A673 (cell line): ENCODE measurements at regions of chr7 and their contacts with region 1.

Region 1: GRCh38 chr7:36999626-37000485 is 275.6 kb upstream of the AOAH start:
- DNase-seq: no peak
- H3K4me3 ChIP-seq: no peak overlapping the region
- H3K27ac ChIP-seq: no peak overlapping the region
- H3K4me1 ChIP-seq: no peaks in the 10 kb centered on the region
- H3K27me3 ChIP-seq: peaks cover 33% of the 10 kb centered on the region
- CTCF ChIP-seq: no peak

Region 2: GRCh38 chr7:36456138-36456537 is 543.7 kb before region 1 on chr7:
- CTCF ChIA-PET with region 1: no interaction called
- POLR2A ChIA-PET with region 1: interaction called, 10 read pairs
- intact Hi-C with region 1: no loop called
- DNase-seq: no peak
- H3K4me3 ChIP-seq: no peak overlapping the region
- H3K27ac ChIP-seq: no peak overlapping the region
- H3K4me1 ChIP-seq: no peaks in the 10 kb centered on the region
- H3K27me3 ChIP-seq: no peaks in the 10 kb centered on the region
- CTCF ChIP-seq: no peak

Region 3: DNA sequence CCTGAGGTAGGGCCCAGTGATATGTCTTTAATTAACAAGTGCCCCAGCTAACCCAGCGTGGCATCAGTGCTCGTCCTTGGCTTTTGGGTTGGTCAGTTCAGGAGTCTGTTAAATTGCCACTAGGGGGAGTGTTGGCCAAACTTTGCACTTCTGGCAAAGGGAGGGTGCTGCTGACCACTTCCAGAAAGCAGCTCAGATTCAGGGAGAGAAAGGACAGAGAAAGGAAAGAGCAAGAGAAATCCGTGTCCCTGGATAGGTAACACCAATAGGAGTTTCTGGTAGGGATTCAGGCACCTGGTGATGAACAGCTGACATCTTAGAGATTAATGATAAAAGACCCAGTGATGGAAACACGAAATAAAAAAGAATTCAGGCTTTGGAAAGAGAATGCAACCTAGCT is 32.5 kb before region 1 on chr7:
- CTCF ChIA-PET with region 1: no interaction called
- POLR2A ChIA-PET with region 1: no interaction called
- intact Hi-C with region 1: no loop called
- DNase-seq: peak; percentile 48
- H3K4me3 ChIP-seq: no peak overlapping the region
- H3K27ac ChIP-seq: no peak overlapping the region
- H3K4me1 ChIP-seq: no peaks in the 10 kb centered on the region
- H3K27me3 ChIP-seq: no peaks in the 10 kb centered on the region
- CTCF ChIP-seq: peak; percentile 75

Region 4: GRCh38 chr7:37376386-37376785 is 376.5 kb after region 1 on chr7:
- CTCF ChIA-PET with region 1: no interaction called
- POLR2A ChIA-PET with region 1: no interaction called
- intact Hi-C with region 1: no loop called
- DNase-seq: no peak
- H3K4me3 ChIP-seq: no peak overlapping the region
- H3K27ac ChIP-seq: no peak overlapping the region
- H3K4me1 ChIP-seq: no peaks in the 10 kb centered on the region
- H3K27me3 ChIP-seq: no peaks in the 10 kb centered on the region
- CTCF ChIP-seq: no peak